Esophagus muscularis mucosa (tissue), 4 donors: ENCODE measurements at regions of chr12 and their contacts with region 1.

Region 1: GRCh38 chr12:6230321-6231110 is 30.3 kb downstream of the CD9 start:
- DNase-seq: no peak
- H3K4me3 ChIP-seq: peak overlapping the region; percentile 26 to 43 (median 27)
- H3K27ac ChIP-seq: peak overlapping the region; percentile 94 to 100 (median 98)
- H3K4me1 ChIP-seq: peaks cover 93 to 100% (median 100%) of the 10 kb centered on the region in 4 donors
- H3K27me3 ChIP-seq: no peaks in the 10 kb centered on the region
- CTCF ChIP-seq: no peak
- EP300 ChIP-seq: peak; percentile 61
- POLR2A ChIP-seq: no peak

Region 2: GRCh38 chr12:6092784-6093722 is 137.5 kb before region 1 on chr12:
- intact Hi-C with region 1: no loop called
- DNase-seq: no peak
- H3K4me3 ChIP-seq: no peak overlapping the region
- H3K27ac ChIP-seq: peak overlapping the region; percentile 31 to 66 (median 54)
- H3K4me1 ChIP-seq: peaks cover 47 to 61% (median 59%) of the 10 kb centered on the region in 4 donors
- H3K27me3 ChIP-seq: no peaks in the 10 kb centered on the region
- CTCF ChIP-seq: no peak
- EP300 ChIP-seq: no peak
- POLR2A ChIP-seq: no peak

Region 3: DNA sequence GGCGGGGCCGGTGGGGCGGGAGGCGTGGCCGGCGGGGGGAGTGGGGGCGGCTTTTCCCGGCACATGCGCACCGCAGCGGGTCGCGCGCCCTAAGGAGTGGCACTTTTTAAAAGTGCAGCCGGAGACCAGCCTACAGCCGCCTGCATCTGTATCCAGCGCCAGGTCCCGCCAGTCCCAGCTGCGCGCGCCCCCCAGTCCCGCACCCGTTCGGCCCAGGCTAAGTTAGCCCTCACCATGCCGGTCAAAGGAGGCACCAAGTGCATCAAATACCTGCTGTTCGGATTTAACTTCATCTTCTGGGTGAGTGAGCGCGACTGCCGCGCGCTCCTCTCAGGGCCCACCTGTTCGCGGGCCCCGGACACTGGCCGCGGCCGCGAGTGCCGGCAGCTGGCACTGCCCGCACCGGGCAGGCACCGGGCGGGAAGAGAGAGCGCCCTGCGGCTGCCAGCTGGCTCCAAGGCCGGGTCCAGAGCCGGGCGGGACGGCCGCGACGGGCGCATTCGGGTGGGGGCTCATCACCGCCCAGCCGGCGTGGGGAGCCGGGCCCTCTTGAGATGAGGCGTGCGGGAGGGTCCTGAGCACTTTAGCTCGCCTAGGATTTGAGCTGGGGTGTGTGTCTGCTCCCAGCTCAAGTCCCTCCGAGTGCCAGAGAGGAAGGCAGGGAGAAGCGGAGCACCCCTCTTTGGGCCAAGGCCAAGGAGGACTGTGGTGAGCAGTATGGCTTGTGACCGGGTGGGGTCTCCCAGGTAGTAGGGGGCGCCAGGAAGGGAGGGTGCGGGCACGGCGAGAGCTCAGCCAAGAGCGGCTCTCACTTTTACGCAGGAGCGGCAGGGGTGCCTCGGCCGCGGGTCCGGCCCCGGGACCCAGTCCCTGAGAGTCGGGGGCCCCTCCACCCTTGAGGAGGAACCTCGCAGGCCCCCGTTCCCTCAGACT is 30.0 kb before region 1 on chr12 and contains the start of gene CD9:
- intact Hi-C with region 1: loop called (anchors 2 kb)
- DNase-seq: no peak
- H3K4me3 ChIP-seq: peak within 1 kb of the TSS; percentile 78 to 100 (median 98)
- H3K27ac ChIP-seq: peak within 1 kb of the TSS; percentile 94 to 100 (median 98)
- H3K4me1 ChIP-seq: peaks cover 50 to 83% (median 80%) of the 10 kb centered on the region in 4 donors
- H3K27me3 ChIP-seq: no peaks in the 10 kb centered on the region
- CTCF ChIP-seq: no peak
- EP300 ChIP-seq: no peak
- POLR2A ChIP-seq: peak; percentile 47
- total RNA-seq, gene CD9: 349 to 416 (median 399) TPM

Region 4: DNA sequence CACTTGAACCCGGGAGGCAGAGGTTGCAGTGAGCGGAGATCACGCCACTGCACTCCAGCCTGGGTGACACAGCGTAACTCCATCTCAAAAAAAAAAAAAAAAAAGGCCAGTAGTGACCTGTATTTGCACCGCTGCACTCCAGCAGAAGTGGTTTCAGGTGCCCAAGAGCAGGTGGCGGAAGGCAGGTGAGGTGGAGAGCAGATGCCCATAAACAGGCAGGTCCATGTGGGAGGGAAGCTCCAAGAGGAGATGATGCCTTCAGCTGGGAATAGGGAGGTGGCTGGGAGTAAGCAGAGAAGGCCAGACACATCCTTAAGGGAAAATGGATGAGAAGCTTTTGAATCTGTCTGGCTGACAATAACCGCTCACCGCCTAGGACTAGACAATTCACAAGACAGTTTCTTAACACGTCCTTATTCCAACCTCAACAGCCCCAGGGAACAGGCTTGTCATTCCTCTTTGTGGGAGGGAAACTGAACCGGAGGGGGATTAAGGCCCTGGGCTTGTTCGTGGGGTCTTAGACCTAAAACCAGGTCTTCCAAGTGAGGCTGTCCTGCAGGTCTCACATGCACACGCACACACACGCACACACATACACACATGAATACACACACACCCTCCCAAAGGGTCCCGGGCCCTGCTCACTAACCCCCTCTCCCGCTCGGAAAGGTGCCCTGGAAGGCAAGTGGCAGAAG is 36.1 kb after region 1 on chr12:
- intact Hi-C with region 1: no loop called
- DNase-seq: no peak
- H3K4me3 ChIP-seq: no peak overlapping the region
- H3K27ac ChIP-seq: peak overlapping the region; percentile 79 to 84 (median 81)
- H3K4me1 ChIP-seq: peaks cover 0 to 50% (median 43%) of the 10 kb centered on the region in 4 donors
- H3K27me3 ChIP-seq: no peaks in the 10 kb centered on the region
- CTCF ChIP-seq: no peak
- EP300 ChIP-seq: no peak
- POLR2A ChIP-seq: no peak

Region 5: DNA sequence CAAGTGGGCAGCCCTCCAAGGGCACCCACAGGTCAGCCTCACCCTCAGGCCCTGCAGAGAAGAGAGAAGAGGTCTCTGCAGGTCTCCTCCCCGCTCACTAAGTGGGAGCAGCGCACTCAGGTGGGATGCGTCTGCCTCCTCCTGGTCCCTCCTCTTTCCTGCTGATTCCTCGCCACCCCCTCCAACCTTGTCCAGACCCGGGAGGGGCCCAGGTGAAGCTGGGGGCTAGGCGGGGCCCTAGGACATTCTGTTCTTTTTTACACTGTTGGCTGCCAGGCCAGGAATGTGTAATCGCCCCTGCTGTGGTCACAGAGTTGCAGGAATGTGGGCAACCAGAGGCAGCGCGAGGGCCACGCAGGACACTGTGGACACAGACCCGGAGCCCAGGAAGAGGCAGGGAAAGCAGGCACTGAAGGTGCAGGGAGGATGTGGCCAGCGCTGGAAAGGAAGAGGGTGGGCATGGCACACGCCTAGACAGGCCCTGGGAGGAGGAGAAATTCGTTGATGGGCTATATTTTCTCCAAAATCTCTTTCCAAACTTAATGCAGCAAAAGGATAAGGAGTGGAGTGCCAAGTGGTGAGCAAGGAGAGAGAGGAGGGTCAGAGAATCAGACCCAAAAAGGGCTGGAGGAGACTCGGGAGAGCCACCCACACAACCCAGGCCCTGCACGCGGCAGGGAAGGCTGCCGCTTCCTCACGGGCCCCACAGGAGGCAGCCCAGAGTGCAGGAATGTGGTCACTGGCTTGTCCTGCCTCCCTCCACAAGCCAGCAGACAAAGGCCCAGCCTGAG is 145.8 kb after region 1 on chr12:
- intact Hi-C with region 1: no loop called
- DNase-seq: no peak
- H3K4me3 ChIP-seq: no peak overlapping the region
- H3K27ac ChIP-seq: peak overlapping the region; percentile 73 to 82 (median 78)
- H3K4me1 ChIP-seq: peaks cover 29 to 71% (median 68%) of the 10 kb centered on the region in 4 donors
- H3K27me3 ChIP-seq: no peaks in the 10 kb centered on the region
- CTCF ChIP-seq: peak; percentile 27 to 70 (median 58)
- EP300 ChIP-seq: peak; percentile 69
- POLR2A ChIP-seq: no peak